ENCODE measurements at regions of chr7 and their contacts with region 1.

Region 1: DNA sequence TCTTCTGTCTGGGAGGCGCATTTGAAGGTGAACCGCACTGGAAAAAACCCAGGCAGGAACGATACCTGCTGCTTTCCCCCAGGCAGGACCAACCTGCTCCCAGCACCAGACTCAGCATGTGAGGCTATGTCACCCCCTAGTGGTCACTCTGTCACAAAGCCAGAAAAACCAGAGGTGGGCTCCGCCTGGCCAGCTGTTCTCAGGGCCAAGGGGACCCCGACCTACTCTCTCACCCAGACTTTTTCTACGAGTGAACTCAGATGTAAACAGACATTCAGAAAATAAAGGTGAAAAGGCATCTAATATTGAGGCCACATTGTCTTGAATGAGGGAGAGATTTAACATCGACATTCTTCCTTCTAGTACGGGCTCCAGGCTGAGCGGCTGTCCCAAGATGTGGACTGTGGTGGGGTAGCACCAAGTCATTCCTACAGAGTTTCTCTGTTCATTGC is 117.3 kb downstream of the PRKAG2 start:
- DNase-seq: peak; percentile 92
- H3K4me3 ChIP-seq: no peak overlapping the region
- H3K27ac ChIP-seq: no peak overlapping the region
- H3K4me1 ChIP-seq: peaks cover 20 to 21% of the 10 kb centered on the region in 2 experiments; a peak in 3 of 4 replicates
- H3K27me3 ChIP-seq: peaks cover 13% of the 10 kb centered on the region; the same call in 1 of the 2 replicates
- CTCF ChIP-seq: peak; percentile 99
- EP300 ChIP-seq: no peak
- RAD21 ChIP-seq: peak; percentile 99

Region 2: GRCh38 chr7:151448261-151449252 is 311.1 kb before region 1 on chr7:
- CTCF ChIA-PET with region 1: interaction called, 16 read pairs
- POLR2A ChIA-PET with region 1: no interaction called
- DNase-seq: peak; percentile 91
- H3K4me3 ChIP-seq: peak overlapping the region in 1 of 2 experiments; percentile 45; a peak in 1 of 4 replicates
- H3K27ac ChIP-seq: no peak overlapping the region
- H3K4me1 ChIP-seq: no peaks in the 10 kb centered on the region; a peak in 1 of 4 replicates
- H3K27me3 ChIP-seq: no peaks in the 10 kb centered on the region
- CTCF ChIP-seq: peak; percentile 74
- EP300 ChIP-seq: no peak
- RAD21 ChIP-seq: peak; percentile 78

Region 3: DNA sequence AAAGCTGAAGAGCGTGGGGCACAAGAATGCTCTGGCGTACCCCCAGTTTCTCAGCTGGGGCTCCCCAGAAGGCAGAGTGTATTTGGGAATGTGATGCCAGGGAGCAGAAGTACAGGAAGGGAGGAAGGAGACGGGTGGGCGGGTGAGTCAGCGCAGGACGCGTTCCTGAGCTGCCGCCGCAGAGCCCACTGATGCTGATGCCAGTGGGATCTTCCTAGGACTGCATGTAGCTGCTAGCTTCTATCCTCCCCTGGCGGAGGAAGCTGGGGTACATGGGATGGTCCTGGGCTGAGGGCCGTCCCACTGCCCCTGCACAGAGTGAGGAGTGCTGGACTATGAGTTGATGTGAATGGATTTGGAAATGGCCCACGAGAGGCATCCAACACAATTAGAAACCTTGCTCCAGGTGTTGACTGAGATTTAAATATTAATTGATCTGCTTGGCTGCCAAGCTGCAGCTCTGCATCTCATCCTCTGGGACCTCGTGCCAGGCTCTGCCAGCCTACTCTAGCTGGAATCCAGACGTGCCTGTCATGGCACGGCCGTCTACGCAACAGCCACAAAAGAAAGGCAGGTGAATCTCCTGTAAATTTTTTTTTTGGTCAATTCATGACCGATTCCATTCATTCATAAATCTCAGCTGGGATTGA is 173.7 kb before region 1 on chr7:
- CTCF ChIA-PET with region 1: interaction called, 24 read pairs
- POLR2A ChIA-PET with region 1: no interaction called
- DNase-seq: no peak
- H3K4me3 ChIP-seq: no peak overlapping the region
- H3K27ac ChIP-seq: no peak overlapping the region
- H3K4me1 ChIP-seq: no peaks in the 10 kb centered on the region
- H3K27me3 ChIP-seq: no peaks in the 10 kb centered on the region
- CTCF ChIP-seq: no peak
- EP300 ChIP-seq: no peak
- RAD21 ChIP-seq: no peak

Region 4: DNA sequence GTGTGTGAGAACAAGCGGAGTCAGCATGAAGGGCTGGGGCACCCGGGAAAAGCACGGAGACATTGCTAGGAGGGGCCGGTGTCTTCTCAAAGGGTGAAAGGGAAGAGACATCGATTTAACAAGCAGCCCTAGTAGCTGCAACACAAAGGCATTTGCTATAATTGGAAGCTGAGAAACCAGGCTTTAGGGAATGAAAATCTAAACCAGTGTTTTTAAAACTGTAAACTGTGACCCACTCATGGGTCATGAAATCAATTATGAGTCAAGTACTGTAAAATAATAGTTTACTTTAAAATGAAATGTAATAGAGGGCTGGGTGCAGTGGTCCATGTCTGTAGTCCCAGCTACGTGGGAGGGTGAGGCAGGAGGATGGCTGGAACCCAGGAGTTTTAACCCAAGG is 111.2 kb before region 1 on chr7:
- CTCF ChIA-PET with region 1: interaction called, 15 read pairs
- POLR2A ChIA-PET with region 1: no interaction called
- DNase-seq: no peak
- H3K4me3 ChIP-seq: no peak overlapping the region
- H3K27ac ChIP-seq: no peak overlapping the region
- H3K4me1 ChIP-seq: peaks cover 0 to 10% of the 10 kb centered on the region in 2 experiments; a peak in 1 of 4 replicates
- H3K27me3 ChIP-seq: no peaks in the 10 kb centered on the region
- CTCF ChIP-seq: no peak
- EP300 ChIP-seq: no peak
- RAD21 ChIP-seq: no peak

Region 5: GRCh38 chr7:151727579-151728285 is 31.9 kb before region 1 on chr7:
- CTCF ChIA-PET with region 1: interaction called, 42 read pairs
- POLR2A ChIA-PET with region 1: no interaction called
- DNase-seq: peak; percentile 79
- H3K4me3 ChIP-seq: no peak overlapping the region
- H3K27ac ChIP-seq: peak overlapping the region in 1 of 2 experiments; percentile 65; a peak in 2 of 4 replicates
- H3K4me1 ChIP-seq: peaks cover 22 to 27% of the 10 kb centered on the region in 2 experiments; a peak in 3 of 4 replicates
- H3K27me3 ChIP-seq: no peaks in the 10 kb centered on the region
- CTCF ChIP-seq: peak; percentile 40
- EP300 ChIP-seq: peak; percentile 37 to 94; a peak in 2 of 4 replicates
- RAD21 ChIP-seq: no peak

Region 6: DNA sequence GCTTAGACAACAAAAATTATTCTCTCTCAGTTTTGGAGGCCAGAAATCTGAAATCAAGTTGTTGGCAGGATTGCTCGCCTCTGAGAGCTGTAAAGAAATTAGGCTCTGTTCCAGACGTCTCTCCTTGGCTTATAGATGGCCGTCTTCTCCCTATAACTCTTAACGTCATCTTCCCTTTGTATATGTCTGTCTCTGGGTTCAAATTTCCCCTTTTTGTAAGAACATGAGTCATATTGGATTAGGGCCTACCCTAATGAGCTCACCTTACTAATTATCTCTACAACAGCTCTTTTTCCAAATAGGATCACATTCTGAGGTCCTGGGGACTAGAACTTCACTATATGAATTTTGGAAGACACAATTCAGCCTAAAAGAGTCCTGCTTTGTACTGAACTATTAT is 219.0 kb after region 1 on chr7:
- CTCF ChIA-PET with region 1: no interaction called
- POLR2A ChIA-PET with region 1: no interaction called
- DNase-seq: no peak
- H3K4me3 ChIP-seq: no peak overlapping the region
- H3K27ac ChIP-seq: no peak overlapping the region
- H3K4me1 ChIP-seq: no peaks in the 10 kb centered on the region
- H3K27me3 ChIP-seq: peaks cover 11% of the 10 kb centered on the region
- CTCF ChIP-seq: no peak
- EP300 ChIP-seq: no peak
- RAD21 ChIP-seq: no peak

Region 7: GRCh38 chr7:152054367-152055230 is 295.0 kb after region 1 on chr7:
- CTCF ChIA-PET with region 1: no interaction called
- POLR2A ChIA-PET with region 1: no interaction called
- DNase-seq: no peak
- H3K4me3 ChIP-seq: no peak overlapping the region
- H3K27ac ChIP-seq: no peak overlapping the region
- H3K4me1 ChIP-seq: peaks cover 4 to 5% of the 10 kb centered on the region in 2 experiments; a peak in 2 of 4 replicates
- H3K27me3 ChIP-seq: no peaks in the 10 kb centered on the region
- CTCF ChIP-seq: no peak
- EP300 ChIP-seq: no peak
- RAD21 ChIP-seq: no peak